Activated CD4-positive, alpha-beta memory T cell treated with anti-CD3 and anti-CD28 coated beads for 36 hours (primary cell): ENCODE measurements at regions of chr11 and their contacts with region 1.

Region 1: GRCh38 chr11:96215110-96215782 is 127.7 kb downstream of the MAML2 start:
- DNase-seq: peak; percentile 51
- H3K4me3 Mint-ChIP-seq: peak overlapping the region; percentile 40
- H3K27ac Mint-ChIP-seq: peak overlapping the region; percentile 96
- H3K4me1 Mint-ChIP-seq: peaks cover 84% of the 10 kb centered on the region
- H3K27me3 Mint-ChIP-seq: no peaks in the 10 kb centered on the region

Region 2: DNA sequence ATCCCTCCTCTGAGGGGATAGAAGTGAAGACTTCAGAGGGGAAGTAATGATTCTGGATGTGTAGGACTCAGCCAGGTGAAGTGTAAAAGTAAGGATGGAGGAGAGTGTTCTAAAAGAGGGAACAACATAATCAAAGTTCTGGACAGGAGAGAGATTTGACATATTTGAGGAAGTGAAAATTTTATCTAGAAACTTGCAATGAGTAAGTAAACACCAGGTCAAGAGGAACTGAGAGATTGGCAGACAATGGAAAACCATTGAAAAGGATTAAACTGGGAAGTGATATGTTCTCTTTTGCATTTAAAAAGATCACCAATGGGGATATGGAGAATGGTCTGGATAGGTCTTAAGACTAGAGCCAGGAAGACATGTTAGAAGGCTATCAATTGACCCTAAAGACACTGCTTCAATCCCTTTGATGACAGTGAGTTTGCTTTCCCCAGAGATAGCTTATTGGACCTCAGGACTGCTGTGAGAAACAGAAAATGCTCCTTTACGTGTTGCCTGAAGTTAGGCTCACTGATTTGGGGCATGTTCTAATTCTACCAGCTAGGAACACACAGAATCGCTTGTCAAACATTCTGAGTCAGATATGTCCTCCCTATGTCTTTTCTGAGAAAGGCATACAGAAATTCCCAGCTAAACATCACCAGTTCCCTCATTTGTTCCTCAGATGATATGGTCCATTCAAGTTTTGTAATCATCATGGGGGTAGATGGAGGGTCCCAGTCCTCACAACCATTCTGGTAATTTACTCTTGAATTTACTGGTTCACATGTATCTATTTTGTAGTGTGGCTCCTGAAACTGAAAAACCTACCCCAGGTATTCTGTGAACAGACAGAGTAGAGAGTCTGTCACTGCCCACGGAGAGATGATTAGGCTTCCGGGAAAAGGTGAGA is 17.2 kb before region 1 on chr11:
- CTCF ChIA-PET with region 1: no interaction called
- POLR2A ChIA-PET with region 1: no interaction called
- intact Hi-C with region 1: loop called (anchors 1 kb)
- DNase-seq: peak; percentile 50
- H3K4me3 Mint-ChIP-seq: peak overlapping the region; percentile 28
- H3K27ac Mint-ChIP-seq: peak overlapping the region; percentile 94
- H3K4me1 Mint-ChIP-seq: peaks cover 86% of the 10 kb centered on the region
- H3K27me3 Mint-ChIP-seq: no peaks in the 10 kb centered on the region

Region 3: GRCh38 chr11:96288915-96289314 is 73.7 kb after region 1 on chr11:
- CTCF ChIA-PET with region 1: no interaction called
- POLR2A ChIA-PET with region 1: no interaction called
- intact Hi-C with region 1: no loop called
- DNase-seq: no peak
- H3K4me3 Mint-ChIP-seq: no peak overlapping the region
- H3K27ac Mint-ChIP-seq: no peak overlapping the region
- H3K4me1 Mint-ChIP-seq: peaks cover 79% of the 10 kb centered on the region
- H3K27me3 Mint-ChIP-seq: no peaks in the 10 kb centered on the region